ENCODE measurements at regions of chr10 and their contacts with region 1.

Region 1: DNA sequence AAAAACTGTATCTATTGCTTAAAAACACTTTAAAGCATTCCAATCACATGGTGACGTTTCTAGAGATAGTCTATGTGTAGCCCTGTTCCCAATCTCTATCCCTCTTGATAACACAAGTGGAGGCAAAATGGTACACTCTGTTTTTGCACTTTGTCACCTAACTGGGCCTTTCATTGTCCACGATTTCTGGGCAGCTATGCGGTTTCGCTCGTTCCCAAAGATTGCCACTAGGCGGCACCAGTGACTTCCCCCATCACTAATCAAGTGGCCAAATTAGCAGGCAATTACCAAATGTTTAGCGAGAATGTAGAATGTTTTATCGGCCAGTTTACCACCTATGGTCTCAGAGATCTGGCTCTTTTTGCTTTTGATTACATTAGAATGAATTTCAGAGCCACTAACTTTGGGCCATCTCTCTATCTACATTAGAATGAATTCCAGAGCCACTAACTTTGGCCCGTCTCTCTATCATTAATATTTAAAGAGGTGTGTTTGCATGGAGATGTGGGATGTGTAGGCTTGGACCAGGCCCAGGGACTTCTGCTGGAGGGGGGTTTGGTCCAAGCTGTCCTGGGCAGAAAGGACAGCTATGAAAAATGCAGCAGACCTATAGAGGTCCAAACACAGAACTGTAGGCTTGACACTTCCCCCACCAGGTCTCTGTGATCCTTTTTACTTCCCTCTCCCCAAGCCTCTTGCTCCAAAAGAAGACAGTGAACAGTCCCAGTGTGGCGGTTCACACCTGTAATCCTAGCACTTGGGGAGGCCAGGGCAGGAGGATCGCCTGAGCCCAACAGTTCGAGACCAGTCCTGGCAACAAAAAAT is 90.1 kb downstream of the EPC1 start:
- DNase-seq: peak; percentile 83
- ATAC-seq: peak; percentile 86
- H3K4me3 Mint-ChIP-seq: no peak overlapping the region
- H3K27ac Mint-ChIP-seq: no peak overlapping the region
- H3K4me1 Mint-ChIP-seq: peaks cover 14% of the 10 kb centered on the region
- H3K27me3 Mint-ChIP-seq: no peaks in the 10 kb centered on the region
- CTCF ChIP-seq: peak; percentile 84

Region 2: DNA sequence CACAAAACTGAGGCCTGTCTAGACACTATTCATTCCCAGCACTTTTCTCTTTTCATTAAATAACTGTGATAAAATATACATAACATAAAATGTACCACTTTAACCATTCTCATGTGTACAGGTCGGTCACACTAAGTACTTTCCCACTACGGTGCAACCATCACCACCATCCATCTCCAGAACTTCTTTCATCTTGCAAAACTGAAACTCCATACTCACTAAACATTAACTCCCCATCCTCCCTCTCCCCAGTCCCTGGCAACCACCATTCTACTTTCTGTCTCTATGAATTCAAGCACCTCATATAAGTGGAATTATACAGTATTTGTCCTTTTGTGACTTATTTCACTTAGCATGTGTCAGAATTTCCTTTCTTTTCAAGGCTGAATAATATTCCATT is 381.2 kb before region 1 on chr10:
- CTCF ChIA-PET with region 1: no interaction called
- POLR2A ChIA-PET with region 1: no interaction called
- intact Hi-C with region 1: no loop called
- DNase-seq: peak; percentile 12
- ATAC-seq: peak; percentile 39
- H3K4me3 Mint-ChIP-seq: no peak overlapping the region
- H3K27ac Mint-ChIP-seq: no peak overlapping the region
- H3K4me1 Mint-ChIP-seq: peaks cover 25% of the 10 kb centered on the region
- H3K27me3 Mint-ChIP-seq: no peaks in the 10 kb centered on the region
- CTCF ChIP-seq: no peak

Region 3: GRCh38 chr10:32190890-32191491 is 65.8 kb before region 1 on chr10:
- CTCF ChIA-PET with region 1: interaction called, 8 read pairs
- POLR2A ChIA-PET with region 1: no interaction called
- intact Hi-C with region 1: loop called (anchors 5 kb)
- DNase-seq: no peak
- ATAC-seq: peak; percentile 47
- H3K4me3 Mint-ChIP-seq: no peak overlapping the region
- H3K27ac Mint-ChIP-seq: no peak overlapping the region
- H3K4me1 Mint-ChIP-seq: no peaks in the 10 kb centered on the region
- H3K27me3 Mint-ChIP-seq: no peaks in the 10 kb centered on the region
- CTCF ChIP-seq: peak; percentile 77

Region 4: DNA sequence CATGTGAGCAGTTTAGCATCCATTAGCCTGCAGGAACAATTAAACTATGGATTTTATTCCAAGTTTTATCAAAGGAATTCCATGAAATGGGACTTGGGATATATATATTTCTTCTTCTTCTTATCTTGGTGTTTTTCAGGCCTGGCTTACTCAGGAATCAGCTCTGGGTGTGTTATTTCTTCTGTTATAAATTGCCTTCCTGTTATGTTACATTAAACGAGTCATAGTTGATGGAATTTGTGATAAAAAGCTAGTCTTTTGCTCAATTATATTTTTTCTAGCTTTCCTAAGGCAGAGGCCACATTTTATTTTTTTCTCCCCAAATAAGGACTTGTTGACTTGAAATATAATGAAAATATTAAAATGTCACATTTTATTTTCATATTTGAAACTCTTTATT is 51.2 kb before region 1 on chr10:
- CTCF ChIA-PET with region 1: no interaction called
- POLR2A ChIA-PET with region 1: no interaction called
- intact Hi-C with region 1: no loop called
- DNase-seq: no peak
- ATAC-seq: no peak
- H3K4me3 Mint-ChIP-seq: no peak overlapping the region
- H3K27ac Mint-ChIP-seq: no peak overlapping the region
- H3K4me1 Mint-ChIP-seq: no peaks in the 10 kb centered on the region
- H3K27me3 Mint-ChIP-seq: no peaks in the 10 kb centered on the region
- CTCF ChIP-seq: no peak

Region 5: DNA sequence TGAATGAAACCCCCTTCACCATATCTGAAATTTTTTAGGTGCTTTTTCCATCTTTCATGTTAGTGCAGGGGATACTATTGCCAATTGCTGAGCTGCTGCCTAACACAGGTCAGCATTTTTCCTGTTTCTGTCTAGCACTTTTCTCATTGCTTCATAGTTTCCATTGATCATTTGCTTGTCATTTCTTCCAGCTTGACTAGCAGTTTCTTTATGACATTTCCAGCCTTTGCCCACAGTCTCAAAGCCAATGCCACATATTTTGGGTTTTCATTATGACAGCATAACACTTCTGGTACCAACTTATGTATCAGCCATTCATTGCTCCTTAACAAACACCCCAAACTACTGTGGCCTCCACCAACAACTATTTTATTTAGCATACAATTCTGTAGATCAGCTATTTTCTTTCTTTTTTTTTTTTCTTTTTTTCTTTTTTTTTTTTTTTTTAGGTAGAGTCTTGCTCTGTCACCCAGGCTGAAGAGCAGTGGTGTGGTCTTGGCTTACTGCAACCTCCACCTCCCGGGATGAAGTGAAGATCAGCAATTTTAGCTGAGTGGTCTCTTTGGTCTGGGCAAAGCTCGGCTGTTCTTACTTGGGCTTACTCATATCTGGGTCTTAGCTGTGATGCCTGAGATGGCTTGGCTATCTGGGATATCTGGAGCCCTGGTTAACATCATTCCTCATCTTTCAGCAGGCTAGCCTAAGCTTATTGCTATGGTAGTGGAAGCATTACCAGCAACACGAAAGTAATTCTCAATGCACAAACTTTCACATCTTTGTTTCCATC is 12.2 kb before region 1 on chr10:
- CTCF ChIA-PET with region 1: interaction called, 27 read pairs
- POLR2A ChIA-PET with region 1: no interaction called
- intact Hi-C with region 1: no loop called
- DNase-seq: peak; percentile 65
- ATAC-seq: peak; percentile 95
- H3K4me3 Mint-ChIP-seq: peak overlapping the region; percentile 31
- H3K27ac Mint-ChIP-seq: peak overlapping the region; percentile 88
- H3K4me1 Mint-ChIP-seq: peaks cover 21% of the 10 kb centered on the region
- H3K27me3 Mint-ChIP-seq: peaks cover 4% of the 10 kb centered on the region
- CTCF ChIP-seq: no peak

Region 6: DNA sequence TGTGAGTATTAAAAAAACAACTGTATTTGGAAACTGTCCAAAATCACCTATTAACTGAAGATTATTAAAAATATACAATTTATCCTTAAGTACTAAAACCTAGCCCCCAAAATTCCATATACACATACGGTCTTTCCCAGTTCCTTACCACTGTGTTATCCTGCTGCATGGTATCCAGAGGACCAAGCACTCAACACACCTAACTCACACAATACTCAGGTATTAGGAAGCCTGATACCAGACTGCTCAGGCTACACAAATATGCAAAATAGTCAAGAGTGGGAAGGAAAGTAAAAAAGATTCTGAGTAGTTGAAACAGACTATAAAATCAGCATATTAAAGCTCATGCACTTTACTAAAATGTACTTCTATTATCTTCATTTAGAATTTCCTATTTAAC is 23.0 kb after region 1 on chr10:
- CTCF ChIA-PET with region 1: interaction called, 10 read pairs
- POLR2A ChIA-PET with region 1: no interaction called
- intact Hi-C with region 1: no loop called
- DNase-seq: no peak
- ATAC-seq: no peak
- H3K4me3 Mint-ChIP-seq: no peak overlapping the region
- H3K27ac Mint-ChIP-seq: peak overlapping the region; percentile 52
- H3K4me1 Mint-ChIP-seq: peaks cover 17% of the 10 kb centered on the region
- H3K27me3 Mint-ChIP-seq: no peaks in the 10 kb centered on the region
- CTCF ChIP-seq: no peak

Region 7: DNA sequence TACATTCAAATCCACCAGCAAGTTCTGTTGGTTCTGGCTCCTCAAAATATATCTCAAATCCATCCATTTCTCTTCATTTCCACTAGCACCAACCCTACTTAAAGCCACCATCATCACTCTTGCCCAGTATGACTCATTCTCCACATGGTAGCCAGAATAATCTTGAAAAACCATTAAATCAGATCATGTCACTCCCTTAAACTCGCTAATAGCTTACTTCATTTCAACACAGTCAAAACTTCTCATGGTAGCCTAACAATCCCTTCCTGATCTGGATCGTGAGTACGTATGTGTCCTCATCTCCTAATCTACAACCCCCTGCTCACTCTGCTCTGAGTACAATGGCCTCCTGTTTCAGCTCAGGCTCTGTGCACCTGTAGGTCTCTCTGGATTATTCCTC is 81.4 kb after region 1 on chr10:
- CTCF ChIA-PET with region 1: interaction called, 25 read pairs
- POLR2A ChIA-PET with region 1: interaction called, 3 read pairs
- intact Hi-C with region 1: loop called (anchors 1 kb)
- DNase-seq: no peak
- ATAC-seq: no peak
- H3K4me3 Mint-ChIP-seq: no peak overlapping the region
- H3K27ac Mint-ChIP-seq: peak overlapping the region; percentile 62
- H3K4me1 Mint-ChIP-seq: peaks cover 89% of the 10 kb centered on the region
- H3K27me3 Mint-ChIP-seq: no peaks in the 10 kb centered on the region
- CTCF ChIP-seq: no peak

Region 8: DNA sequence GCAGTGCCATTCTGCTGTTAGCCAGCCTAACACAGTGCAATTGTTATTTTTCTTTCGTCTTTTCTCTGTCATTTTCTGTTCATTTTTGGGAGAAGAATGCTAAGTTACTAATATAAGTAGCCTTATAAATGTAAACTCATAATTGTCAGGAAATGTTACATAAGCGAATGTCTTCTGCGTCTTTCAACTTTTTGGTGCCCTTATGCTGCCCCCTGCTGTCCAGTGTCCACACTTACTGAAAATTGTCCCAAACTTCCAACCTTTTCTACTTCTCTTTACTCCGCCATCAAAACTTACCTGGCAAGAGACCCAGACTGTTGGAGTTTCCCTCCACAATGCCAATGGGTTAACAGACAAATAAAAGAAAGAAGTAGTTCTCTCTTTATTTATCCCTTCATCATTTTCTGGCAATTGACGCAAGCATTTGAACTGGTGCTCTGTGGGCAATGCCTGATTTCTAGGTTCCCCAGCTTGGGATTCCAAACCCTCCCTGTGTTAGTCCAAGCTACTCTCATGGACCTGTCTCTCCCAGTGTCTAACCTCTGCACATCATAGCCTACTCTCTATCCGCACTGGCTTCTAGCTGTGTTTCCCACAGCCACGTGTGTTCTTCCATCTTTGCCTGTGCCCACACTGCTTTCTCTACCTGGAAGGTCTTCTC is 111.1 kb after region 1 on chr10:
- CTCF ChIA-PET with region 1: interaction called, 14 read pairs
- POLR2A ChIA-PET with region 1: interaction called, 3 read pairs
- intact Hi-C with region 1: loop called (anchors 2 kb)
- DNase-seq: peak; percentile 78
- ATAC-seq: peak; percentile 54
- H3K4me3 Mint-ChIP-seq: peak overlapping the region; percentile 42
- H3K27ac Mint-ChIP-seq: peak overlapping the region; percentile 52
- H3K4me1 Mint-ChIP-seq: peaks cover 46% of the 10 kb centered on the region
- H3K27me3 Mint-ChIP-seq: no peaks in the 10 kb centered on the region
- CTCF ChIP-seq: peak; percentile 94